ENCODE measurements at regions of chr1 and their contacts with region 1.

Region 1: DNA sequence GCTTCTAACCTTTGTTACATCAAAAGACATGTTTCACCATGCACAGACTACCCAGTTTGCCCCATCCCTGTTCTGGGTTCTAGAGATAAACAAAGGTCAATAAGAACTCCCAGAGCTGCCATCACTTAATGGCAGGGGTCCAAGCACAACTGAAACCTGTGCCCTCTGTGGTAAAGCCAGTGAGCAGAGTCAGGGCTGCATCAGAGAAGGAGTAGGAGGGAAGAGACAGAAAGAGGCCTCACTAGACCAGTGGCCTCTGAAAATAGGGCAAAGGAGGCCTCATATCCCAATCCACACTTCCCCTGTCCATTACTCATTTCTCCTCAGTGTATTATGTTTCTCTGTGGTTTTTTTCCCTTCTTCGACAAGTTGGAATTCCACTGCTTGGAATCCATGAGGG is 10.2 kb downstream of the ATP1A2 start:
- DNase-seq: no peak
- H3K4me3 ChIP-seq: no peak overlapping the region
- H3K27ac ChIP-seq: no peak overlapping the region
- H3K4me1 ChIP-seq: no peaks in the 10 kb centered on the region
- CTCF ChIP-seq: no peak

Region 2: DNA sequence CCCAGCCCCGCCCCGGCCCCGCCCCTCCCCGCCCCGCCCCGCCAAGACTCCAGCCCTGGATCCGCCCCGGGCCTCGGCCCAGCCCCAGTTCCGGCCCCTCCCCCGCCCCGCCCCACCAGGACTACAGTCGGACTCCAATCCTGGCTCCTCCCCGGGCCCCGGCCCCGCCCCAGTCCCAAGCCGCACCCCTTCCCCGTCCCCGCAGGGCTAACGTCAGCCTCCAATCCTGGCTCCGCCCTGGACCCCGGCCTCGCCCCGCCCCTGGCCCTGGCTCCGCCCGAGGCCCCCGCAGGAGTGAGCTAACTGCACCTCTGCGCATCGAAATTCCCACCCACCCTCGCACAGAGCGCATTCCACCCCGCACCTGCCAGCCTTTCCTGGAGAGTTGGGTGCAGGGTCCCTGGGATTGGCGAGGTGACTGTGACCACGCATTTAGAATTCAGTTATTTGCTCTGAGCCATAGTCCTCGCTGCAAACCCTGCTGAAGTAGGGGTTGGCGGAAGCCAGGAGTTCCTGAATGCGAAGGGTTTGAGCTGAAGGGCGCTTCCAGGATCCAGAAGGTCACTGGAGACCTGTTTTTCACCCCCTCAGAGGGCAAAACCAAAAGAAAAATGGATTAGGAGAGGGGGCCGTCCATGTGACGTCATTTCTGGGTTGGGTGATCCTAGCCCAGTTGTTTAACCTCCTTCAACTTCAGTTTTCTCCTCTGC is 26.7 kb before region 1 on chr1:
- CTCF ChIA-PET with region 1: no interaction called
- POLR2A ChIA-PET with region 1: no interaction called
- intact Hi-C with region 1: no loop called
- DNase-seq: peak; percentile 95
- H3K4me3 ChIP-seq: peak overlapping the region; percentile 62
- H3K27ac ChIP-seq: peak overlapping the region; percentile 6
- H3K4me1 ChIP-seq: peaks cover 47% of the 10 kb centered on the region
- CTCF ChIP-seq: no peak

Region 3: GRCh38 chr1:160115545-160116282 is 10.0 kb before region 1 on chr1 and contains the start of gene ATP1A2:
- CTCF ChIA-PET with region 1: no interaction called
- POLR2A ChIA-PET with region 1: no interaction called
- intact Hi-C with region 1: no loop called
- DNase-seq: no peak
- H3K4me3 ChIP-seq: no peak within 1 kb of the TSS
- H3K27ac ChIP-seq: no peak within 1 kb of the TSS
- H3K4me1 ChIP-seq: peaks cover 4% of the 10 kb centered on the region
- CTCF ChIP-seq: no peak
- total RNA-seq, gene ATP1A2: not detected in 2 replicates

Region 4: GRCh38 chr1:160149716-160150115 is 24.0 kb after region 1 on chr1:
- CTCF ChIA-PET with region 1: no interaction called
- POLR2A ChIA-PET with region 1: no interaction called
- intact Hi-C with region 1: loop called (anchors 1 kb)
- DNase-seq: no peak
- H3K4me3 ChIP-seq: no peak overlapping the region
- H3K27ac ChIP-seq: no peak overlapping the region
- H3K4me1 ChIP-seq: no peaks in the 10 kb centered on the region
- CTCF ChIP-seq: no peak